Mammary epithelial cell (primary cell): ENCODE measurements at regions of chr15 and their contacts with region 1.

Region 1: GRCh38 chr15:81296673-81297072 is 27.3 kb downstream of the STARD5 start:
- DNase-seq: no peak
- H3K4me3 ChIP-seq: no peak overlapping the region
- H3K27ac ChIP-seq: no peak overlapping the region
- H3K4me1 ChIP-seq: peaks cover 22% of the 10 kb centered on the region
- H3K27me3 ChIP-seq: no peaks in the 10 kb centered on the region
- CTCF ChIP-seq: no peak

Region 2: GRCh38 chr15:81312790-81313543 is 16.3 kb after region 1 on chr15:
- CTCF ChIA-PET with region 1: no interaction called
- dilution Hi-C with region 1: no loop called
- in situ Hi-C with region 1: no loop called
- intact Hi-C with region 1: loop called (anchors 1 kb)
- DNase-seq: peak; percentile 99
- H3K4me3 ChIP-seq: no peak overlapping the region
- H3K27ac ChIP-seq: peak overlapping the region; percentile 57
- H3K4me1 ChIP-seq: peaks cover 20% of the 10 kb centered on the region
- H3K27me3 ChIP-seq: no peaks in the 10 kb centered on the region
- CTCF ChIP-seq: no peak

Region 3: GRCh38 chr15:81357223-81357622 is 60.5 kb after region 1 on chr15:
- CTCF ChIA-PET with region 1: no interaction called
- dilution Hi-C with region 1: no loop called
- in situ Hi-C with region 1: no loop called
- intact Hi-C with region 1: no loop called
- DNase-seq: no peak
- H3K4me3 ChIP-seq: no peak overlapping the region
- H3K27ac ChIP-seq: no peak overlapping the region
- H3K4me1 ChIP-seq: no peaks in the 10 kb centered on the region
- H3K27me3 ChIP-seq: peaks cover 5% of the 10 kb centered on the region
- CTCF ChIP-seq: no peak

Region 4: GRCh38 chr15:82122746-82123400 is 826.2 kb after region 1 on chr15:
- CTCF ChIA-PET with region 1: no interaction called
- dilution Hi-C with region 1: no loop called
- in situ Hi-C with region 1: no loop called
- intact Hi-C with region 1: loop called (anchors 5 kb)
- DNase-seq: peak; percentile 99
- H3K4me3 ChIP-seq: no peak overlapping the region
- H3K27ac ChIP-seq: peak overlapping the region; percentile 82
- H3K4me1 ChIP-seq: peaks cover 26% of the 10 kb centered on the region
- H3K27me3 ChIP-seq: no peaks in the 10 kb centered on the region
- CTCF ChIP-seq: no peak